Tibial artery (tissue), 4 donors: ENCODE measurements at regions of chr19 and their contacts with region 1.

Region 1: DNA sequence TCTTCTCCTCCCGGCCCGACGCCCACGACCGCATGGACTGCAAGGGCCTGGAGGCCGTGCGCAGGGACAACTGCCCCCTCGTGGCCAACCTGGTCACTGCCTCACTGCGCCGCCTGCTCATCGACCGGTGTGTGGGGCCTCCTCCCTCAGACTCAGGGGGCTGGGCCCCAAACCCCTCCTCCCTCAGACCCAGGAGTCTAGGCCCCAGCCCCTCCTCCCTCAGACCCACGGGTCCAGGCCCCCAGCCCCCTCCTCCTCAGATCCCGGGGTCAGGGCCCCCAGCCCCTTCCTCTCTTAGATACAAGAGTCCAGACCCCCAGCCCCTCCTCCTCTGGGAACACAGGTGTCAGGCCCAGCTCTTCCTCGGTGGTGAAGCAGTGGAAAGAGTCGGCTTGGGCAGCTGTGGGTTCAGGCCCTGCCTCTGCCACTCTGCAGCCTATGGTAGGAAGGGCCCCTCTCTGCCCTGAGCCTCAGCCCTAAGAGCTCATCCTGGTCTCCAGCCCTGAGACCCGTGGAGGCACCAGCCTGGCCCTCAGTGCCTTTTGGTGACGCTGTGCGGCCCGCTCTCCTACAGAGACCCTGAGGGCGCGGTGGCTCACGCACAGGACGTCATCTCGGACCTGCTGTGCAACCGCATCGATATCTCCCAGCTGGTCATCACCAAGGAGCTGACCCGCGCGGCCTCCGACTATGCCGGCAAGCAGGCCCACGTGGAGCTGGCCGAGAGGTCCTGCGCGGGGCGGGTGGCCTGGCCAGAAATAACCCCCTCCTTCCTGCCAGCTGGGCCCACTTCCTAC is 3.7 kb upstream of the SPIB start:
- DNase-seq: peak; percentile 68 to 79
- H3K4me3 ChIP-seq: no peak overlapping the region
- H3K27ac ChIP-seq: no peak overlapping the region
- H3K4me1 ChIP-seq: peaks cover 0 to 17% (median 10%) of the 10 kb centered on the region in 4 donors
- H3K27me3 ChIP-seq: peaks cover 0 to 36% of the 10 kb centered on the region in 2 donors
- CTCF ChIP-seq: peak; percentile 72 to 85

Region 2: DNA sequence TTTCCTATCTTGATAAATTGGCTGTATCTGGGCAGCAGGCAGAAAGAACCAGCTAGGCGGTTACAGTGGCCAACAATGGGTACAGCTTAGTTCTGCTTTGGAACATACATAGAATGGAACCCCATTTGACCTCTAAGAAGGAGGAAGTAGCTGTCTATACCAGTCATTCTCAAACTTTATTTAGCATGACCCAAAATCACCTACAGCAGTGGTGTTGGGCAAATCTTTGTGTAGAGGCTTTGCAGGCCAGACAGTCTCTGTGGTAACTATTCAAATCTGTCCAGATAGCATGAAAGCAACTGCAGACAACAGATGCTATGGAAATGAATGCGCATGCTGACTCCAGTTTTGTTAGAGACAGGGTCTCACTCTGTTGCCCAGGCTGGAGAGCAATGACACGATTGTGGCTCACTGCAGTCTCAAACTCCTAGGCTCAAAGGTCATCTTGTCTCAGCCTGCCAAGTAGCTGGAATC is 73.9 kb before region 1 on chr19:
- intact Hi-C with region 1: no loop called
- DNase-seq: no peak
- H3K4me3 ChIP-seq: no peak overlapping the region
- H3K27ac ChIP-seq: no peak overlapping the region
- H3K4me1 ChIP-seq: no peaks in the 10 kb centered on the region
- H3K27me3 ChIP-seq: peaks cover 0 to 3% of the 10 kb centered on the region in 2 donors
- CTCF ChIP-seq: no peak

Region 3: GRCh38 chr19:50371914-50372475 is 43.1 kb before region 1 on chr19:
- intact Hi-C with region 1: loop called (anchors 2 kb)
- DNase-seq: no peak
- H3K4me3 ChIP-seq: no peak overlapping the region
- H3K27ac ChIP-seq: no peak overlapping the region
- H3K4me1 ChIP-seq: peaks cover 0 to 15% (median under 1%) of the 10 kb centered on the region in 4 donors
- H3K27me3 ChIP-seq: no peaks in the 10 kb centered on the region
- CTCF ChIP-seq: no peak

Region 4: DNA sequence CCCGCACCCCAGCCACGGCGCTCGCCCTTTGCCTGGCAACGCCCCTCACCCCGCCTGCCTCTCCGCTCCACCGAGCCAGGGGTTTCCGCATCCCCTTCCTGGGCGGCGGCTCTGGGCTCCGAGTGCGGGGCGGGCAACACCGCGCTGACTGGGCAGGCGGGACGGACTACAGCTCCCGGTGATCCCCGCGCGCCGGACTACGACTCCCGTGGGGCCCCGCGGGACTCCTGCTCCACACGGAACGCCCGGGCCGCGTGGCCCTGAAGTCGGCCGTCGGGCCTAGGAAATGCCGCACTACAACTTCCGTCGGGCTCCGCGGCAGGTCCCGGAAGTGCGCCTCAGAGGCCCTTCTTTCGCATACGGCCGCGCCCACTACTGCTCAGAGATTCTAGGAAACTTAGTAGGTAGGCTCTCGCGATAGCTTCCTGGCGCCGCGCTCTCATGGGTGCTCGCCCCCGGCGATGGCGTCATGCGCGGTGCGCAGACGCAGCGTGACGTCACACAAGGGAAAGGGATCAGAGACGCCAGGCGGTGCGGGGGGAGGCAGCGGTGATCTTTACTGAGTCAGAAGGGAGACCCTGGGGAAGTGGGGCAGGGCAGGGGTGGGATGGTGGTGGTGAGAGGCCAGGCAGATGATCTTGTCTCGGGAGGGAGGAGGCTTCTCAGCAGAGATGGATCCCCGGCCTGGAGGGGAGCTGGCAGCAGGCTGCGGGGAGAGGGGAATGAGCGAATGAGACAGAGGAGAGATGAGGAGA is 96.2 kb after region 1 on chr19 and contains the start of gene JOSD2:
- intact Hi-C with region 1: no loop called
- DNase-seq: peak; percentile 99
- H3K4me3 ChIP-seq: peak within 1 kb of the TSS; percentile 75 to 79
- H3K27ac ChIP-seq: peak within 1 kb of the TSS; percentile 83 to 84
- H3K4me1 ChIP-seq: peaks cover 0 to 16% (median 13%) of the 10 kb centered on the region in 4 donors
- H3K27me3 ChIP-seq: no peaks in the 10 kb centered on the region
- CTCF ChIP-seq: peak in 1 of 2 experiments; percentile 30